Dendritic cell treated with granulocyte-macrophage colony-stimulating factor and Interleukin-4, amounts not matched to agents 40 ng/mL and 50 ng/mL, for 4 days (primary cell): ENCODE measurements at regions of chr11 and their contacts with region 1.

Region 1: GRCh38 chr11:129922674-129923073 is 27.3 kb upstream of the NFRKB start:
- H3K4me3 Mint-ChIP-seq: no peak overlapping the region
- H3K27ac Mint-ChIP-seq: no peak overlapping the region
- H3K4me1 Mint-ChIP-seq: peaks cover 18% of the 10 kb centered on the region
- H3K27me3 Mint-ChIP-seq: no peaks in the 10 kb centered on the region

Region 2: GRCh38 chr11:129785383-129786111 is 137.1 kb before region 1 on chr11:
- intact Hi-C with region 1: loop called (anchors 10 kb)
- H3K4me3 Mint-ChIP-seq: no peak overlapping the region
- H3K27ac Mint-ChIP-seq: no peak overlapping the region
- H3K4me1 Mint-ChIP-seq: peaks cover 20% of the 10 kb centered on the region
- H3K27me3 Mint-ChIP-seq: peaks cover 1% of the 10 kb centered on the region

Region 3: GRCh38 chr11:130002846-130003716 is 80.4 kb after region 1 on chr11:
- intact Hi-C with region 1: loop called (anchors 5 kb)
- H3K4me3 Mint-ChIP-seq: peak overlapping the region; percentile 95
- H3K27ac Mint-ChIP-seq: peak overlapping the region; percentile 100
- H3K4me1 Mint-ChIP-seq: peaks cover 40% of the 10 kb centered on the region
- H3K27me3 Mint-ChIP-seq: no peaks in the 10 kb centered on the region

Region 4: GRCh38 chr11:130131961-130132850 is 209.5 kb after region 1 on chr11:
- intact Hi-C with region 1: loop called (anchors 1 kb)
- H3K4me3 Mint-ChIP-seq: no peak overlapping the region
- H3K27ac Mint-ChIP-seq: no peak overlapping the region
- H3K4me1 Mint-ChIP-seq: peaks cover 16% of the 10 kb centered on the region
- H3K27me3 Mint-ChIP-seq: no peaks in the 10 kb centered on the region